OCI-LY7 (cell line): ENCODE measurements at regions of chr14 and their contacts with region 1.

Region 1: DNA sequence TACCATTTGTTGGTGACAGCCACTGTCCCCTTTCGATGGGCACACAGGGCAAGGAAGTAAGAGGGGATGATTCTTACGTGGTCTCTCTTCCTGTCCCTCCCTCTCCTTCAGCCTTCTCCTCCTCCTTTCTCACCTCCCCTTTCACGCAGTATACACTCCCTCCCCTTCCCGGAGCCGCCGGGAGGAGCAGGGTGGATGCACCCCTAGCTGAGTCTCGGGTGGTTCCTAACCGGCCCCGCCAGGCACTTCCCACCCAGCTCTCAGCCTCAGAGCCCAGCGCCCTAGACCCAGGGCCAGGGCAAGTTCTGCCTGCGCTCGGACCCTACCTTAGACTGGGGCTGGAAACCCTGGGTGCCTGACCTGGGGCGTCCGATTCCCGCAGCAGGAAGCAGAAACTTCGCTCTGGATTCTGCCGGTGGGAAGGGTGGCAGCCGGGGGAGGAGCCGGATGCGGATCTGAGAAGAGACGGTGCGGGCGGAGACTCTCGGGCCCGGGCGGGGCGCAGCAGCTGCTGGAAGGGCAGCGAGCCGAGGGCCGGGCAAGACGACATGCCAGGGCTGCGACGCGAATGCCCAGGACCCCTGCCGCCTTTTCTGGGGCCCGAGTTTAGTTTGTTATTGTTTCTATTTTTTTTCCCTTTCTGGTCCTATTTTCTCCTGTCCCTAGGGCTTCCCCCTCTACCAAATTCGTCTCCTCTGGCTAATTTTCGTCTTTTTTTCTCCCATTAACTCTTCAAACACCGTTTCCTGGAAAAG is at the start of gene TEP1:
- DNase-seq: peak; percentile 76
- H3K4me3 ChIP-seq: peak within 1 kb of the TSS; percentile 77
- H3K27ac ChIP-seq: peak within 1 kb of the TSS; percentile 48
- H3K4me1 ChIP-seq: peaks cover 37% of the 10 kb centered on the region
- CTCF ChIP-seq: no peak
- total RNA-seq, gene TEP1: 12.9 and 13.4 TPM in 2 replicates

Region 2: GRCh38 chr14:20059745-20060144 is 353.5 kb before region 1 on chr14 and contains the start of gene OR4L1:
- CTCF ChIA-PET with region 1: no interaction called
- POLR2A ChIA-PET with region 1: no interaction called
- intact Hi-C with region 1: no loop called
- DNase-seq: no peak
- H3K4me3 ChIP-seq: no peak within 1 kb of the TSS
- H3K27ac ChIP-seq: no peak within 1 kb of the TSS
- H3K4me1 ChIP-seq: no peaks in the 10 kb centered on the region
- CTCF ChIP-seq: no peak
- total RNA-seq, gene OR4L1: not detected in 2 replicates

Region 3: GRCh38 chr14:20327005-20327869 is 86.0 kb before region 1 on chr14:
- CTCF ChIA-PET with region 1: interaction called, 7 read pairs
- POLR2A ChIA-PET with region 1: interaction called, 9 read pairs
- intact Hi-C with region 1: loop called (anchors 2 kb)
- DNase-seq: peak; percentile 79
- H3K4me3 ChIP-seq: peak overlapping the region; percentile 13
- H3K27ac ChIP-seq: peak overlapping the region; percentile 10
- H3K4me1 ChIP-seq: peaks cover 50% of the 10 kb centered on the region
- CTCF ChIP-seq: peak; percentile 97

Region 4: GRCh38 chr14:20427231-20428009 is 14.2 kb after region 1 on chr14:
- CTCF ChIA-PET with region 1: interaction called, 8 read pairs
- POLR2A ChIA-PET with region 1: interaction called, 16 read pairs
- intact Hi-C with region 1: no loop called
- DNase-seq: peak; percentile 82
- H3K4me3 ChIP-seq: peak overlapping the region; percentile 54
- H3K27ac ChIP-seq: peak overlapping the region; percentile 94
- H3K4me1 ChIP-seq: peaks cover 55% of the 10 kb centered on the region
- CTCF ChIP-seq: no peak

Region 5: DNA sequence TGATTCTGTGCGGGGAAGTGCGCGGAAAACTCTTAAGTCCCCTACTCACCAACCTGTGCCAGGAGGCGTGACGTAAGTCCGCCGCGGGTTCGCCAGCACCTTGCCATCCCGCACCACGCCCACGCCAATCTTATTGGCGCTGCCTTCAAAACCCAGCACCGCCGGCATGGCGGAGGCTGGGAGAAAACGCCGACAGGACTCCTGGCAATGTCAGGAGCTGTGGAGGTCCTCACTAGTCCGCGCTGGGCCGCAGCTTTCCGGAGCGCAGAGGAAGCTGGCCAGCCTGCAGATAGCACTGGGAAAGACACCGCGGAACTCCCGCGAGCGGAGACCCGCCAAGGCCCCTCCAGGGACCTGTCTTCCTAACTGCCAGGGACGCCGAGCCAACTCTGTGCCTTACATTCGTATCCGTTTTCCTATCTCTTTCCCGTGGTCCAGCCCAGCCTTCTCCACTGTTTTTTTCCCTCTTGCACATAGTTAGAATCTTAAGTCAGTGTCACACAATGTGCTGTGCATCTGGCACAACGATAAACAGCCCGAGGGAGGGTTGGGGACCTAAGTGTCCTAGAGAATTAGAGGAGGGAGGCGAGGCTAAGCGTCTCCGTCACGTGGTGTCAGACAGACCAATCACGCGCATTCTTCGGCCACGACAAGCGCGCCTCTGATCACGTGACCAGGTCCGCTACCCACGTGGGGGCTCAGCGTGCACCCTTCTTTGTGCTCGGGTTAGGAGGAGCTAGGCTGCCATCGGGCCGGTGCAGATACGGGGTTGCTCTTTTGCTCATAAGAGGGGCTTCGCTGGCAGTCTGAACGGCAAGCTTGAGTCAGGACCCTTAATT is 41.5 kb after region 1 on chr14 and contains the starts of genes APEX1 and OSGEP:
- CTCF ChIA-PET with region 1: interaction called, 7 read pairs
- POLR2A ChIA-PET with region 1: interaction called, 20 read pairs
- intact Hi-C with region 1: loop called (anchors 1 kb)
- DNase-seq: peak; percentile 100
- H3K4me3 ChIP-seq: peak within 1 kb of the TSS; percentile 99
- H3K27ac ChIP-seq: peak within 1 kb of the TSS; percentile 78
- H3K4me1 ChIP-seq: peaks cover 42% of the 10 kb centered on the region
- CTCF ChIP-seq: no peak
- total RNA-seq, gene APEX1: 110 and 117 TPM in 2 replicates
- total RNA-seq, gene OSGEP: 85.2 and 86.6 TPM in 2 replicates

Region 6: DNA sequence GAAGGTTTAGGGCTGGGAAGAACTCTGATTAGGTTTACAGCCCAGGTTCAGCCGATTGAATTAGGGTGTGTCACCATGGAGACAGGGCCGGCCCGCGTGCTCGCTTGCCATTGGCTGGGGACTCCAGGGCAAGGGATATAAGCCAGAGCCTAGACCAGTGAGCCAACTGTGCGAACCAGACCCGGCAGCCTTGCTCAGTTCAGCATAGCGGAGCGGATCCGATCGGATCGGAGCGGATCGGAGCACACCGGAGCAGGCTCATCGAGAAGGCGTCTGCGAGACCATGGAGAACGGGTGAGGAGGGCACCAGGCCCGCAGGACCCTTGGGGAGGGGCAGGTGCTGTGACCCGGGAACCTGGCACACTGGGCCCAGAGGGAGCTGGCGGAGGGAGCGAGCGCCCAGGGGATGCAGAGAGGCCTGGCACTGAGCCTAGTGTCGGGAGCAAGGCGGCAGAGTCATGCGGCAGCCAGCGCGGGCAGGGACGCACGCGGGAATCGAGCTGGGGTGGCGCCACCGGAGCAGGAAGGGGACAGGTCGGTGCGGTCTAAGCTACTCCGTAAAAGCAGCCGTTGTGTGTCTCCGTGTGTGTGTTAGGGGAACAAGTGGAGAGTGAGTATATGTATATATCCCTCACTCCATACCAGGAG is 56.1 kb after region 1 on chr14 and contains the start of gene PNP:
- CTCF ChIA-PET with region 1: interaction called, 4 read pairs
- POLR2A ChIA-PET with region 1: interaction called, 20 read pairs
- intact Hi-C with region 1: loop called (anchors 1 kb)
- DNase-seq: peak; percentile 92
- H3K4me3 ChIP-seq: peak within 1 kb of the TSS; percentile 83
- H3K27ac ChIP-seq: peak within 1 kb of the TSS; percentile 71
- H3K4me1 ChIP-seq: peaks cover 23% of the 10 kb centered on the region
- CTCF ChIP-seq: peak; percentile 21; the same call in 1 of the 2 replicates
- total RNA-seq, gene PNP: 120 and 127 TPM in 2 replicates

Region 7: GRCh38 chr14:20682435-20683124 is 269.4 kb after region 1 on chr14:
- CTCF ChIA-PET with region 1: no interaction called
- POLR2A ChIA-PET with region 1: interaction called, 5 read pairs
- intact Hi-C with region 1: loop called (anchors 5 kb)
- DNase-seq: peak; percentile 68
- H3K4me3 ChIP-seq: peak overlapping the region; percentile 74
- H3K27ac ChIP-seq: peak overlapping the region; percentile 49
- H3K4me1 ChIP-seq: peaks cover 42% of the 10 kb centered on the region
- CTCF ChIP-seq: no peak